Posterior vena cava (tissue), 2 donors: ENCODE measurements at regions of chr1 and their contacts with region 1.

Region 1: GRCh38 chr1:25727635-25728330 is 72.2 kb upstream of the SELENON start:
- DNase-seq: peak; percentile 88

Region 2: GRCh38 chr1:25669781-25670763 is 57.7 kb before region 1 on chr1:
- intact Hi-C with region 1: no loop called
- DNase-seq: no peak

Region 3: GRCh38 chr1:25680701-25681100 is 47.1 kb before region 1 on chr1:
- intact Hi-C with region 1: loop called in 1 of 2 experiments (anchors 1 kb)
- DNase-seq: no peak

Region 4: GRCh38 chr1:25691233-25691610 is 36.6 kb before region 1 on chr1:
- intact Hi-C with region 1: no loop called
- DNase-seq: peak; percentile 19

Region 5: GRCh38 chr1:25944986-25945385 is 217.2 kb after region 1 on chr1:
- intact Hi-C with region 1: no loop called
- DNase-seq: no peak

Region 6: GRCh38 chr1:27556781-27557595 is 1829.2 kb after region 1 on chr1:
- intact Hi-C with region 1: no loop called
- DNase-seq: peak; percentile 98